IMR-90 (cell line): ENCODE measurements at regions of chr11 and their contacts with region 1.

Region 1: GRCh38 chr11:9757809-9758636 is 94.1 kb downstream of the SWAP70 start:
- DNase-seq: peak; percentile 72
- ATAC-seq: peak; percentile 43
- H3K4me3 ChIP-seq: peak overlapping the region; percentile 32
- H3K27ac ChIP-seq: peak overlapping the region; percentile 96
- H3K4me1 ChIP-seq: peaks cover 48% of the 10 kb centered on the region
- H3K27me3 ChIP-seq: no peaks in the 10 kb centered on the region
- CTCF ChIP-seq: peak; percentile 86
- POLR2A ChIP-seq: no peak
- RAD21 ChIP-seq: peak; percentile 86

Region 2: DNA sequence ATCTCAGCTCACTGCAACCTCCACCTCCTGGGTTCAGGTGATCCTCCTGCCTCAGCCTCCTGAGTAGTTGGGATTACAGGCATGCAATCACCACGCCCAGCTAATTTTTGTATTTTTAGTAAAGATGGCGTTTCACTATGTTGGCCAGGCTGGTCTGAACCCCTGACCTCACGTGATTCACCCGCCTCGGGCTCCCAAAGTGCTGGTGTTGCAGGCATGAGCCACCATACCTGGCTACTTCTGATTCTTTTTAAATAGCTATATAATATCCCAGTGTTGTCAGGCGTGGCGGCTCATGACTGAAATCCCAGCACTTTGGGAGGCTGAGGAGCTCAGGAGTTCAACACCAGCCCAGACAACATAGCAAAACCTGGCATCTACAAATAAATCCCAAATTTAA is 464.4 kb before region 1 on chr11:
- CTCF ChIA-PET with region 1: no interaction called
- POLR2A ChIA-PET with region 1: no interaction called
- dilution Hi-C with region 1: no loop called
- in situ Hi-C with region 1: no loop called
- intact Hi-C with region 1: no loop called
- DNase-seq: no peak
- ATAC-seq: no peak
- H3K4me3 ChIP-seq: no peak overlapping the region
- H3K27ac ChIP-seq: no peak overlapping the region
- H3K4me1 ChIP-seq: no peaks in the 10 kb centered on the region
- H3K27me3 ChIP-seq: no peaks in the 10 kb centered on the region
- CTCF ChIP-seq: no peak
- POLR2A ChIP-seq: no peak
- RAD21 ChIP-seq: no peak

Region 3: DNA sequence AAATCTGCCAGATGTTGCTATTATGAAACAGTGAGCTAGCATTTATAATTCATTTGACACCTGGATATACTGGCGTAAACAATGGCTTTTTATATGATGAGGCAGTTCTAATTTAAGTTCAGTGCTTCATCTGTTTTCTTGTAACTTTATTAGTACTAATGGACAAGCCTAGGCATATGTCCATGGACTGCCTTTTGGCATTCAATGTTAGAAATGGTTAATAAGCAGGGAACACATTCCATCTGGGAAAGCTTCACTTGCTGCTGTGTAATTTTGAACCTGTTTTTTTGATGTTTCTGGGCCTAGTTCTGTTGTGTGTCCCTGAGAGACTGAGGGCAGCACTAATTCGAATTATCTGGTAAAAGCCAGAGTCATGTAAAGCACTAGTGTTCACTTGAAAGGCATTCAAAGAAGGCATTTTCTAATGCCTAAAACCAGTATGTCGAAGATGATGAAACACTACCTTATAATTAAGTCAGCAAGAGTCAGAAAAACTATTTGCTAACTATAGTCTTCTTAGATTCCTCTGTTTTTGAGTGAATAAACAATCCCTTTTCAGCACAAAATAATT is 44.4 kb after region 1 on chr11:
- CTCF ChIA-PET with region 1: interaction called, 4 read pairs
- POLR2A ChIA-PET with region 1: interaction called, 3 read pairs
- dilution Hi-C with region 1: no loop called
- in situ Hi-C with region 1: no loop called
- intact Hi-C with region 1: loop called (anchors 2 kb)
- DNase-seq: peak; percentile 91
- ATAC-seq: peak; percentile 85
- H3K4me3 ChIP-seq: no peak overlapping the region
- H3K27ac ChIP-seq: peak overlapping the region; percentile 71
- H3K4me1 ChIP-seq: peaks cover 20% of the 10 kb centered on the region
- H3K27me3 ChIP-seq: no peaks in the 10 kb centered on the region
- CTCF ChIP-seq: no peak
- POLR2A ChIP-seq: no peak
- RAD21 ChIP-seq: no peak

Region 4: DNA sequence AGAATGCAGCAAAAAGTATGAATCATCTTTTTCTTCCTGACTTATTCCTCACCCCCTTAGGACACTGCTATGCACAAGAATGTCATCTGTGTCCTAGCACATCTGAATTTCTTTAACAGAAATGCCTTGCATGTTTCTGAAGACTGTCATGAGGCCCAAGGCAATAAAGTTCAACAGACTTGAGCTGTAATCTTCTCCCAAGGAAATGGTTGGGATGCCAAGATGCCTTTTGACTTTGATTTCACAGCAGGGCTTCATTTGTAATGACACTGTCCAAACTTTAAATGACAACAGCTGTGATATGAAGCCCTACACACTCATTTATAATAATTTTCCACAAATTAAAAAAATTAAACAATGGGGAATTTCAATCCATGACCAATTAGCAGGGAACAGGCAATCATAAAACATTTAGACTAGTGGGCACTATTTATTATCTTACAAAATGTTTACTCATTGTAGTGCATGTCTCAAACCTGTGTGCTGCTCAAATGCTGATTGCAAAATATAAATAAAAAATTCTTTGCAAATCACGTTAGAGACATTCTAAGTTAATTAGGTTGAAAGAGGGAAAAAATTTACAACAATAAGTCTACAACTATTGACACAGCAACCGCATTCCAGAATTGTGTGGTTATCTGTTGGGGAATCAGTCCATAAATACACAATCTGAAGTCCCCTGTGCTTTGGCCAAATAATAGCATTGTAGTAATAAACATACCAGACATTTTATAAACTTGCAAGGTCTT is 148.2 kb after region 1 on chr11:
- CTCF ChIA-PET with region 1: interaction called, 3 read pairs
- POLR2A ChIA-PET with region 1: no interaction called
- dilution Hi-C with region 1: no loop called
- in situ Hi-C with region 1: no loop called
- intact Hi-C with region 1: loop called (anchors 1 kb)
- DNase-seq: peak; percentile 94
- ATAC-seq: peak; percentile 92
- H3K4me3 ChIP-seq: no peak overlapping the region
- H3K27ac ChIP-seq: peak overlapping the region; percentile 92; the same call in 1 of the 2 replicates
- H3K4me1 ChIP-seq: peaks cover 11% of the 10 kb centered on the region
- H3K27me3 ChIP-seq: no peaks in the 10 kb centered on the region
- CTCF ChIP-seq: no peak
- POLR2A ChIP-seq: no peak
- RAD21 ChIP-seq: no peak

Region 5: DNA sequence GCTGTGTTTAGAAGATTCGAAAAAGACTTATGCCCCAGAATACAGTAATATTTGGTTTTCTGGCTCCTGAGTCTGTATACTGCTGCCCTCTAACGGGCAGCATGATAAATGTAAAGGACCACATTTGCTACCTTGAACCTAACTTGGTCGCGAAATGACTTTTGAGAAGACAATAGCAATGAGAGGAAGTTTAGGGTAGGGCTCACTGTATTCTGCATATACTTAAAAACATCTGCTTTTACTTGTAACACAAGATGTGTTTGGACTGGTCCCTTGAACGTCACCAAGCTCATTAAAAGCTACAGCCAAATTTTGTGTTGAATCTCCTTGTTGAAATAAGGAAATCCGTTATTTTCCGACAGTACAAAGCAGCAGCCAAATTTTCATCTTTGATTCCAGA is 215.0 kb after region 1 on chr11:
- CTCF ChIA-PET with region 1: interaction called, 10 read pairs
- POLR2A ChIA-PET with region 1: no interaction called
- dilution Hi-C with region 1: no loop called
- in situ Hi-C with region 1: loop called (anchors 25 kb)
- intact Hi-C with region 1: loop called (anchors 1 kb)
- DNase-seq: peak; percentile 70
- ATAC-seq: peak; percentile 70
- H3K4me3 ChIP-seq: no peak overlapping the region
- H3K27ac ChIP-seq: no peak overlapping the region
- H3K4me1 ChIP-seq: peaks cover 12% of the 10 kb centered on the region; the same call in 1 of the 2 replicates
- H3K27me3 ChIP-seq: no peaks in the 10 kb centered on the region
- CTCF ChIP-seq: peak; percentile 75
- POLR2A ChIP-seq: no peak
- RAD21 ChIP-seq: peak; percentile 85

Region 6: DNA sequence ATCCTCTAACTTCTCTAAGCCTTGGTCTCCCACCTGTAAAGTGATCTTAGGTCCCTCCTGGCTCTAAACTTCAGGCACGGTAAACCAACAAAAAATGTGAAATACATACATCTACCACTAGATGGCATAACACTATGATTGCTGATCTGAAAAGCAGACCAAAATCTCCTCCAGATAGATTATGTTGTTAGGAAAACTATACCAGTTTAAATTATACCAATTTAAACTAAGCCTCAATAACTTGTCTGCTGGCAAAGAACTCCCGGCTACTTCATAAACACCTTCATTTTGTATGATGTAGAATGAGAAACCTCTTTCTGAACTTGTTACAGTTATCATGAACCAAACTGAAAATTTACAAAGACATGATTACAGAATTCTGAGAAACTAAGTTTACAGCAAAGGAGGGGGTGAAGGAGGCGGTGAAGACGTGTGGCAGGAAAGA is 450.1 kb after region 1 on chr11:
- CTCF ChIA-PET with region 1: no interaction called
- POLR2A ChIA-PET with region 1: no interaction called
- dilution Hi-C with region 1: no loop called
- in situ Hi-C with region 1: no loop called
- intact Hi-C with region 1: loop called (anchors 10 kb)
- DNase-seq: peak; percentile 64
- ATAC-seq: peak; percentile 77
- H3K4me3 ChIP-seq: peak overlapping the region; percentile 7; the same call in 1 of the 2 replicates
- H3K27ac ChIP-seq: peak overlapping the region; percentile 67
- H3K4me1 ChIP-seq: peaks cover 7% of the 10 kb centered on the region
- H3K27me3 ChIP-seq: no peaks in the 10 kb centered on the region
- CTCF ChIP-seq: peak; percentile 61
- POLR2A ChIP-seq: no peak
- RAD21 ChIP-seq: peak; percentile 64